ENCODE measurements at regions of chr1 and their contacts with region 1.

Region 1: GRCh38 chr1:54229281-54229891 is 29.4 kb downstream of the MRPL37 start:
- DNase-seq: peak; percentile 23
- H3K4me3 Mint-ChIP-seq: peak overlapping the region; percentile 64
- H3K27ac Mint-ChIP-seq: peak overlapping the region; percentile 66
- H3K4me1 Mint-ChIP-seq: peaks cover 29% of the 10 kb centered on the region
- H3K27me3 Mint-ChIP-seq: no peaks in the 10 kb centered on the region

Region 2: GRCh38 chr1:54008876-54009275 is 220.5 kb before region 1 on chr1:
- intact Hi-C with region 1: no loop called
- DNase-seq: no peak
- H3K4me3 Mint-ChIP-seq: no peak overlapping the region
- H3K27ac Mint-ChIP-seq: no peak overlapping the region
- H3K4me1 Mint-ChIP-seq: no peaks in the 10 kb centered on the region
- H3K27me3 Mint-ChIP-seq: peaks cover 7% of the 10 kb centered on the region

Region 3: DNA sequence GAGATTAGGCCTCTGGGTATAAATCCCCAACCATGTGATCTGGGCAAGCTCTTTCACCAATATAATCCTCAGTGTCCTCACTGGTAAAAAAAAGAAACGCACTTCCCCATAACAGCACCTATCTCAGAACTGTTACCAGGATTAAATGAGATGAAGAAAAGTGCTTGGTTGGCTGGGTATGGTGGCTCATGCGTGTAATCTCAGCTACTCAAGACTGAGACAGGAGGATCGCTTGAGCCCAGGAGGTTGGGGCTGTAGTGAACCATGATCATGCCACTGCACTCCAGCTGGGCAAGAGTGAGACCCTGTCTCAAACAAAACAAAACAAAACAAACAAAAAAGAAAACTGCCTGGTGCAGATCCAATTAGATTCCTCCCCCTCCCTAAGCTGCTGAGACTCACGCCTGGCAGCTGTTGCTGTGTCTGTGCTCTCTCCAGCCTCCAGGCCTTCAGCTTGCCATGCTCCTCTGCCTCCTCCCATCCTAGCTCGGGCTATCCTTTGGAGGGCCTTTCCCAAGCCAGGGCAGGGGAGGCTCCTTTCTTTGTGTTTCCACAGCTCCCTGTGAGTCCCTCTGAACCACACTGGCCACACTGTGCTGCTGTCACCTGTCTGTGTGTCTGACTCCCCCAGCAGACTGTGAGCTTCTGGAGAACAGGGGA is 48.6 kb before region 1 on chr1:
- intact Hi-C with region 1: loop called (anchors 1 kb)
- DNase-seq: no peak
- H3K4me3 Mint-ChIP-seq: no peak overlapping the region
- H3K27ac Mint-ChIP-seq: no peak overlapping the region
- H3K4me1 Mint-ChIP-seq: no peaks in the 10 kb centered on the region
- H3K27me3 Mint-ChIP-seq: no peaks in the 10 kb centered on the region

Region 4: DNA sequence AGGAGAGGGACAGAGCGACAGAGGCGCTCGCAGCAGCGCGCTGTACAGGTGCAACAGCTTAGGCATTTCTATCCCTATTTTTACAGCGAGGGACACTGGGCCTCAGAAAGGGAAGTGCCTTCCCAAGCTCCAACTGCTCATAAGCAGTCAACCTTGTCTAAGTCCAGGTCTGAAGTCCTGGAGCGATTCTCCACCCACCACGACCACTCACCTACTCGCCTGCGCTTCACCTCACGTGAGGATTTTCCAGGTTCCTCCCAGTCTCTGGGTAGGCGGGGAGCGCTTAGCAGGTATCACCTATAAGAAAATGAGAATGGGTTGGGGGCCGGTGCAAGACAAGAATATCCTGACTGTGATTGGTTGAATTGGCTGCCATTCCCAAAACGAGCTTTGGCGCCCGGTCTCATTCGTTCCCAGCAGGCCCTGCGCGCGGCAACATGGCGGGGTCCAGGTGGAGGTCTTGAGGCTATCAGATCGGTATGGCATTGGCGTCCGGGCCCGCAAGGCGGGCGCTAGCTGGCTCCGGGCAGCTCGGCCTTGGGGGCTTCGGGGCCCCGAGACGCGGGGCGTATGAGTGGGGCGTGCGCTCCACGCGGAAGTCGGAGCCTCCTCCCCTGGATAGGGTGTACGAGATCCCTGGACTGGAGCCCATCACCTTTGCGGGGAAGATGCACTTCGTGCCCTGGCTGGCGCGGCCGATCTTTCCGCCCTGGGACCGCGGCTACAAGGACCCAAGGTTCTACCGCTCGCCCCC is 29.4 kb before region 1 on chr1 and contains the starts of genes CYB5RL and MRPL37:
- intact Hi-C with region 1: loop called (anchors 1 kb)
- DNase-seq: peak; percentile 88
- H3K4me3 Mint-ChIP-seq: peak within 1 kb of the TSS; percentile 90
- H3K27ac Mint-ChIP-seq: peak within 1 kb of the TSS; percentile 80
- H3K4me1 Mint-ChIP-seq: peaks cover 31% of the 10 kb centered on the region
- H3K27me3 Mint-ChIP-seq: no peaks in the 10 kb centered on the region
- total RNA-seq, gene CYB5RL: 10.2 and 12.2 TPM in 2 replicates
- total RNA-seq, gene MRPL37: 130 and 134 TPM in 2 replicates

Region 5: DNA sequence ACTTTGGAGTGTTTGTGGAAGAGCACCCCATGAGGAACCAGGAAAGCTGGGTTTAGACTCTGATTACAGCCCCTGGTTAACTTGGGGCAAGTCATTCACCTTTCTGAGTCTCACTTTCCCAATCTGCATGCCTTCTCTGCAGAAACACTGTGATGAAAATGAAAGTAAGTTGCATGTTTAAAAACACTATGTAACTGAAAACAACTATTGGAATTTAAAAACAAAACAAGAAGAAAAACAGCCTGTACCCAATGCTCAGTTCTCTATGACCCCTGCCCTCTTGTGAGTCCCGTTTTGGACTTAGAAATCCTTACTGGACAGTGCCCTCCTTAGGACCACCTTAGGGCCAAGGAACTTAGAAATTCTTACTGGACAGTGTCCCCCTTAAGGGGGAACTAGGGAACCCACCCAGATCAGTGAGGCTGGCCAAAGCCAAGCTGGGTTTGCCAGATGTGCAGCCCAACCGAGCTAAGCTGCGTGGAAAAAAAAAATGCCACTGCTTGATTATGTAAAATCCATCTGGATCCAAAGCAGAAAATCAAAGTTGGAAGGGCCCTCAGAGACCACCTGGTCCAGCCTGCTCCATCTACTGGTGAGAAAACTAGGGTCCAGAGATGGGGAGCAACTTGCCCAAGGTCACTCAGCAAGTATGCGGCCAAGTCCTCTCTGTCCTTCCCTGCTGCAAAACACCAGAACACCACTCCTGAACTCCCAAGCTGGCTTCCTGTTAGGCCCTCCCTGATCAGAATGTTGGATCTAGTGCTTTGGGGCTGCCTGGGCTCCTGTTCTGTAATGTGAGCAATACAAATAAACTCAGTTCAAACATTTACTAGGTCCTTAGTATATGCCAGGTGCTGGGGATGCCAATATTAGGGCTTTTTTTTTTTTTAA is 48.3 kb after region 1 on chr1:
- intact Hi-C with region 1: loop called (anchors 2 kb)
- DNase-seq: no peak
- H3K4me3 Mint-ChIP-seq: peak overlapping the region; percentile 59
- H3K27ac Mint-ChIP-seq: peak overlapping the region; percentile 95
- H3K4me1 Mint-ChIP-seq: peaks cover 54% of the 10 kb centered on the region
- H3K27me3 Mint-ChIP-seq: no peaks in the 10 kb centered on the region

Region 6: DNA sequence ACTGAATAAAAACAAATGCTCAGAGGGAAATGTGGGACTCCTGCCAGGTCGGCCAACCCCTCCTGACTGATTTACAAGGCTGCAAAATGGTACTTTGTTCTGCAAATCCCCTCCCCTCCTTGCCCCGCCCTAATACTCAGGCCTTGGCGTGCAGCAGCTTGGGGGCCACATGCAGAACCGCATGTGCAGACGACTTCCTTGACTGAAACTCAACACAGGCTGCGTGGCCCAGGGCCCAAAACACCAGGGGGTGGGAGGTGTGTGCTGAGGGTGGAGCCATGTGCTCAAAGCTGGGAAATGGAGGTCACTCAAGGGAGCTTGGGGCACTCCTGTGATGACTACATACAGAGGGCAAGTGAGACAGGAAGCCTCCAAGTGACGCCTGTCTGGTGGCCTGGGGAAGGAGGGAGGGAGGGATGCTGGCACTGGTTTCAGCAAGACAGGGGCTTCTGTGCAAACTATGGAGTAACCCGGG is 57.8 kb after region 1 on chr1:
- intact Hi-C with region 1: loop called (anchors 2 kb)
- DNase-seq: peak; percentile 77
- H3K4me3 Mint-ChIP-seq: peak overlapping the region; percentile 74
- H3K27ac Mint-ChIP-seq: peak overlapping the region; percentile 96
- H3K4me1 Mint-ChIP-seq: peaks cover 72% of the 10 kb centered on the region
- H3K27me3 Mint-ChIP-seq: no peaks in the 10 kb centered on the region

Region 7: GRCh38 chr1:54400329-54400728 is 170.9 kb after region 1 on chr1:
- intact Hi-C with region 1: loop called (anchors 1 kb)
- DNase-seq: no peak
- H3K4me3 Mint-ChIP-seq: peak overlapping the region; percentile 35
- H3K27ac Mint-ChIP-seq: peak overlapping the region; percentile 84
- H3K4me1 Mint-ChIP-seq: peaks cover 69% of the 10 kb centered on the region
- H3K27me3 Mint-ChIP-seq: no peaks in the 10 kb centered on the region